Caco-2 (cell line): ENCODE measurements at regions of chr1 and their contacts with region 1.

Region 1: DNA sequence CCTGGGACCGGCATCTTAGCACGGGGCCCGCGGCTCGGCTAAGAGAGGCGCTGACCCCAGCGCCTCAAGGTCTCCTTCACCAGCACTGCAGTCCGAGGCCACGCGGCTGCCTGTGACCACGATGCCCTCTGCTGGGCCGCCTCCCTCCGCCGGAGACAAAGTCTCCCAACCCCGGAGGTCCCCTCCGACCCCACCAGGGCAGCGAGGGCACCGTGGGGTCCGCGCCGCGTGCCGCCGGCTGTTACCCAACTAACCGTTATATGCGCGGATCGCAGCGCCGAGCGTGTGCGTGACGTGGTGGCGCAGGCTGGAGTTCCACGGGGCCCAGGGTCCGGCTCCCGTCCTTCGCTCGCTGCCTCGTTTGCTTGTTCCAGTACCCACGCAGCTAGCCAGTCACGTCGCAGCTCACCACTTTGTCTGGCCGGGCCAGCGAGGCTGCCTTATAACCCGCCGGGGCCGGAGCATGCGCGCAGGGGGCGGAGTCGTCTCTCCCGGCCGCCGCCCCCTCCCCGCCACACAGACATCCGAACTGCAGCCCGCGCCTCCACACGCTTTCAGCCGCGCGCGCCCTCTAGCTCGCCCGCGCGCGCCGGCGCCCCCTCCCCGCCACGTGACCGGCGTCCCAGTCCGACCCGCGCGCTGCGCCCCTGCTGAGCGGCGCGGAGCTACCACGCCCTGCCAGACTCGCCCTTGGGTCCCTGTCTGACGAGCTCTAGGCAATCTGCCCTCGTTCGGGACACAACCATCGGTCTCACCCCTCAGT is at the start of gene SLC16A1:
- DNase-seq: peak; percentile 90 to 92
- H3K4me3 ChIP-seq: peak within 1 kb of the TSS; percentile 69
- H3K4me3 Mint-ChIP-seq: peak within 1 kb of the TSS; percentile 89
- H3K27ac Mint-ChIP-seq: peak within 1 kb of the TSS; percentile 87
- H3K4me1 ChIP-seq: peaks cover 24% of the 10 kb centered on the region
- H3K4me1 Mint-ChIP-seq: peaks cover 20% of the 10 kb centered on the region
- H3K27me3 ChIP-seq: no peaks in the 10 kb centered on the region
- H3K27me3 Mint-ChIP-seq: no peaks in the 10 kb centered on the region
- CTCF ChIP-seq: no peak
- total RNA-seq, gene SLC16A1: 104 and 107 TPM in 2 replicates

Region 2: DNA sequence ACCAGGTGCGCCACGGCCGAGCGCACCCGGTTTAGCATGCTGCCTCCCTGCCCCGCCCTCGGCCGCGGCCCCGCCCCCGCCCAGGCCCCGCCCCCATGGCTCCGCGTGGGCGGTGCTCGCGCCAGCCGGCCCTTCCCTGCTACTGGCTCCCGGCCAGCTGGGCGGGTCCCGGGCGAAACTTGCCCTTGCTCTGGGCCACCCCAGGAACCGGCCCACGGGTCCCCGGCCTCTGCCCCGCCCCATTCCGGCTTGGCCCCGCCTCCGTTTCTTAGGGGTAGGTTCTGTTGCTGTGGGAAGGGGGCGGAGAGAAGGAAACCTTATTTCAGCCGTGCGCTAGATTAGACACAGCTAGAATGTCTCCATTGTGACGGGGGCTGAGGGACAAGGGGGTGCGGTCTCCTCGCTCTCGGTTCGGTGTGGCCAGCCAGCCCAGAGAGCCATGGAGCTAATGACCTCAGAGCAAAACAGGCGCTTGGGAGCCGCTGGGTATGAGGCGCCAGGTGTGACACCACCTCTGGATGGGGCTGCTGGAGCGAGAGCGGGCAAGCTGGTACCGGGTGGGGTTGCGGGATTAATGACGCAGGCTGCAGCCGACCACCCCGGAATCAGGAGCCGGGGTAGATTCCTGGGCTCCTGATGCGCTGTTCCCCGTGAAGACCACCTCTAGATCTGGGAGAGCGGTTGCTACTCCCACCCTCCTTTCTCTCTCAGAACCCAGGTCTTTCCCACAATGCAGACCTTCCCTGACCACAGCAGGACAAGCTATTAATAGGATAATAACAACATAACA is 240.5 kb before region 1 on chr1 and contains the start of gene PPM1J:
- CTCF ChIA-PET with region 1: interaction called, 4 read pairs
- POLR2A ChIA-PET with region 1: interaction called, 3 read pairs
- intact Hi-C with region 1: loop called (anchors 1 kb)
- DNase-seq: peak; percentile 96 to 97
- H3K4me3 ChIP-seq: peak within 1 kb of the TSS; percentile 50
- H3K4me3 Mint-ChIP-seq: peak within 1 kb of the TSS; percentile 87
- H3K27ac Mint-ChIP-seq: no peak within 1 kb of the TSS
- H3K4me1 ChIP-seq: peaks cover 8% of the 10 kb centered on the region; the same call in 1 of the 2 replicates
- H3K4me1 Mint-ChIP-seq: peaks cover 11% of the 10 kb centered on the region
- H3K27me3 ChIP-seq: no peaks in the 10 kb centered on the region
- H3K27me3 Mint-ChIP-seq: no peaks in the 10 kb centered on the region
- CTCF ChIP-seq: no peak
- total RNA-seq, gene PPM1J: 1.1 and 1.5 TPM in 2 replicates

Region 3: GRCh38 chr1:112809253-112809684 is 146.7 kb before region 1 on chr1:
- CTCF ChIA-PET with region 1: no interaction called
- POLR2A ChIA-PET with region 1: interaction called, 4 read pairs
- intact Hi-C with region 1: loop called (anchors 2 kb)
- DNase-seq: peak; percentile 79 to 84
- H3K4me3 ChIP-seq: no peak overlapping the region
- H3K4me3 Mint-ChIP-seq: no peak overlapping the region
- H3K27ac Mint-ChIP-seq: peak overlapping the region; percentile 59
- H3K4me1 ChIP-seq: peaks cover 52% of the 10 kb centered on the region
- H3K4me1 Mint-ChIP-seq: peaks cover 48% of the 10 kb centered on the region
- H3K27me3 ChIP-seq: no peaks in the 10 kb centered on the region
- H3K27me3 Mint-ChIP-seq: no peaks in the 10 kb centered on the region
- CTCF ChIP-seq: peak; percentile 65 to 77

Region 4: DNA sequence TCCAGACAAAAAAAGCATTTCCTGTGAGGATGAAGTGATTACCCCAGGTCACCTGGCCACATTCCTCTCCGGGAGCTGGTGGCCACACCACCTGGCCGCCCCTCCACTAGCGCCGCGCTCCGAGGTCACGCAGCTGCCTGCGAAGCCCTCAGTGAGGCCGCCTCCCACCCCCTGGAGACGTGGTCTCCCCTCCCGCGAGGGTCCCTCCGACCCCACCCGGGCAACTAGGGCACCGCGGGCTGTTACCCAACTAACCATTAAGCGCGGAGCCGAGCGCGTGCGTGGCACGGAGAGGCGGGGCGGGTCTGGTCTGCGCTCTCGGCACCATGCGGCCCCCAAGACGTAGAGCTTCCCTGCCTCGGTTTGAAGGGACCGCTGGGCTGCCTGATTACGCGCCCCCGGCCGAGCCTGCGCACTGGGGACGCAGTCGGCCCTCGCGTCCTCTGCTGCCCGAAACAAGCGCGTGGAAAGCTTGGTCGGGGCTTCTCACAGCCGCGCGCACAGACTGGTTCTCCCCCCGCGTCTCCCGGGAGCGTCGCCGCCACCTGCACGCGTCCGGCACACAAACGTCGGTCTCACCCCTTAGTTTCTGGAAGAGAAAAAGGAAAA is 106.4 kb before region 1 on chr1:
- CTCF ChIA-PET with region 1: no interaction called
- POLR2A ChIA-PET with region 1: interaction called, 12 read pairs
- intact Hi-C with region 1: no loop called
- DNase-seq: peak; percentile 77 to 79
- H3K4me3 ChIP-seq: peak overlapping the region; percentile 81
- H3K4me3 Mint-ChIP-seq: peak overlapping the region; percentile 78
- H3K27ac Mint-ChIP-seq: peak overlapping the region; percentile 99
- H3K4me1 ChIP-seq: peaks cover 25% of the 10 kb centered on the region
- H3K4me1 Mint-ChIP-seq: peaks cover 7% of the 10 kb centered on the region
- H3K27me3 ChIP-seq: no peaks in the 10 kb centered on the region
- H3K27me3 Mint-ChIP-seq: no peaks in the 10 kb centered on the region
- CTCF ChIP-seq: no peak

Region 5: GRCh38 chr1:112882271-112882744 is 73.7 kb before region 1 on chr1:
- CTCF ChIA-PET with region 1: no interaction called
- POLR2A ChIA-PET with region 1: no interaction called
- intact Hi-C with region 1: loop called (anchors 2 kb)
- DNase-seq: no peak
- H3K4me3 ChIP-seq: no peak overlapping the region
- H3K4me3 Mint-ChIP-seq: no peak overlapping the region
- H3K27ac Mint-ChIP-seq: peak overlapping the region; percentile 40
- H3K4me1 ChIP-seq: peaks cover 6% of the 10 kb centered on the region; the same call in 1 of the 2 replicates
- H3K4me1 Mint-ChIP-seq: peaks cover 11% of the 10 kb centered on the region
- H3K27me3 ChIP-seq: no peaks in the 10 kb centered on the region
- H3K27me3 Mint-ChIP-seq: no peaks in the 10 kb centered on the region
- CTCF ChIP-seq: no peak

Region 6: DNA sequence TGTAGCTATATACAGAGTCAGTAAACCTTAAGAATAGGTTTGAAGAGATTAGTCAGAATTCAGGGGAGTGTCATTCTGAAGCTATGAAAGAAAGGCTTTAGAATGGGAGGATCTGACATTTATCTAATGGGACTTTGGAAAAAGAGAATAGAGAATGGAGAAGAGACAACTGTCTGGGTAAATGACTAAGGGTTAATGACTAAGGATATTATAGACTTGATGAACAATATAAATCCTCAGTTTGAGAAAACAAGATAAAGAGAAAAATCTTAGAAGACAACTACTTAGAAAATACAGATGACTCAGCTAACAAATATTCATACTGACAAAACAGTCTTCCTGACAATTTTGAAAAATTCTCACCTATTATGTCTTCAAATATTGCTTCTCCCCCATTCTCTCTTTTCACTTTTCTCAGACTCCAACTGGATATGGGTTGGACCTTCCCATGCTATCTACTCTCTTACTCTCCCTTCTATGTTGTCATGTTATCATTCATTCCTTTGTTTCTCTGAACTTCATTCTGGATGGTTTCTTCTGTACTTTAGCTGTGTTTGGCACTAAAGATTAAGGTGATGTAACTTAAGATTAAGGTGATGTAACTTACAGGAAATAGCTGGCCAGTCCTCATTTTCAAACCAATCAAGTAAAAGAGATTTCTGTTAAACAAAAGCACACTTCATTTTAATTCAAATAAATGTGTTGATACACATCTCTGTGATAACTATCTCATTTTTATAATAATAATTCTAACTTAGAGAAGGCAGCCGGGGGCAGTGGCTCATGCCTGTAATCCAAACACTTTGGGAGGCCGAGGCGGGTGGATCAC is 20.3 kb before region 1 on chr1:
- CTCF ChIA-PET with region 1: no interaction called
- POLR2A ChIA-PET with region 1: interaction called, 5 read pairs
- intact Hi-C with region 1: loop called (anchors 2 kb)
- DNase-seq: no peak
- H3K4me3 ChIP-seq: no peak overlapping the region
- H3K4me3 Mint-ChIP-seq: no peak overlapping the region
- H3K27ac Mint-ChIP-seq: peak overlapping the region; percentile 49
- H3K4me1 ChIP-seq: peaks cover 35% of the 10 kb centered on the region
- H3K4me1 Mint-ChIP-seq: peaks cover 22% of the 10 kb centered on the region
- H3K27me3 ChIP-seq: no peaks in the 10 kb centered on the region
- H3K27me3 Mint-ChIP-seq: no peaks in the 10 kb centered on the region
- CTCF ChIP-seq: no peak

Region 7: DNA sequence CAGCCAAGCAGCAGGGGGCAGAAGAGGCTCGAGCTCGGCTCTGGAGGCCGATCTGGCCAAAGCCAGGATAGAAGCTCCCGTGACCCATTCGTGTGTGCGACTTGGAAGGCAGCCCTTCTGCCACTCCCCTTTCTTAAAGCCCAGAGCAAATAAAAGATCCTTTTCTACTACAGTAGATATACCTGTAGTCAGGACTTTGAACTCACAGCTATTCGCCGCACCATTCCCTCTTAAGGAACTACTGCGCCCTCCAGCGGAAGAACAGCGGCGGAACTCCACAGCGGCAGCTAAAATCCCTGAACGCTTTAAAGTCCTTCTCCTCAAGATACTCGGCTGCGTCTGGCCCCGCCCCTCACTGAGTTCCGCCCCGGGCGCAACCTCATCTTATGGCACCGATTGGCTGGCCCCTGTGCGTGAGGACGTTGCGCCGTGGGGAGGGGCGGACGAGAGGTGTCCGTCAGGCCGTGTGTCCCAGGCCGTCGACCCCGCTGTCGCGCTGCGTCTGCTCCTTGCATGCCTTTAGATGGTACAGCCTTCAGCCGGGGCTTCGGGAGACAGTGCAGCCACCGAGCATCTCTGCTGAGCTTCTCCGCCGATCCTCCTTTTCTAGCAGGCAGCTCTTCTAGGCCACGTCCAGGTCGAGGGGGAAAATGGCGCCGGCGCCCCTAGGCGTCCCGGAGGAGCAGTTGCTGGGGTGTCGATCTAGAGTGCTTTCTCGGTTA is 117.0 kb after region 1 on chr1 and contains the start of gene LRIG2:
- CTCF ChIA-PET with region 1: interaction called, 17 read pairs
- POLR2A ChIA-PET with region 1: interaction called, 10 read pairs
- intact Hi-C with region 1: no loop called
- DNase-seq: peak; percentile 96 to 98
- H3K4me3 ChIP-seq: peak within 1 kb of the TSS; percentile 92
- H3K4me3 Mint-ChIP-seq: peak within 1 kb of the TSS; percentile 85
- H3K27ac Mint-ChIP-seq: peak within 1 kb of the TSS; percentile 80
- H3K4me1 ChIP-seq: peaks cover 5% of the 10 kb centered on the region
- H3K4me1 Mint-ChIP-seq: no peaks in the 10 kb centered on the region
- H3K27me3 ChIP-seq: no peaks in the 10 kb centered on the region
- H3K27me3 Mint-ChIP-seq: no peaks in the 10 kb centered on the region
- CTCF ChIP-seq: peak; percentile 45 to 56
- total RNA-seq, gene LRIG2: 10.7 and 14.4 TPM in 2 replicates